Kidney (tissue), 22 donors: ENCODE measurements at regions of chr11 and their contacts with region 1.

Region 1: GRCh38 chr11:93895106-93895862 is 44.9 kb upstream of the VSTM5 start:
- DNase-seq: peak in 3 of 5 donors; percentile 39 to 85 (median 79)
- H3K4me3 ChIP-seq: no peak overlapping the region
- H3K27ac ChIP-seq: no peak overlapping the region
- H3K4me1 ChIP-seq: no peaks in the 10 kb centered on the region
- H3K27me3 ChIP-seq: no peaks in the 10 kb centered on the region
- CTCF ChIP-seq: peak; percentile 53

Region 2: DNA sequence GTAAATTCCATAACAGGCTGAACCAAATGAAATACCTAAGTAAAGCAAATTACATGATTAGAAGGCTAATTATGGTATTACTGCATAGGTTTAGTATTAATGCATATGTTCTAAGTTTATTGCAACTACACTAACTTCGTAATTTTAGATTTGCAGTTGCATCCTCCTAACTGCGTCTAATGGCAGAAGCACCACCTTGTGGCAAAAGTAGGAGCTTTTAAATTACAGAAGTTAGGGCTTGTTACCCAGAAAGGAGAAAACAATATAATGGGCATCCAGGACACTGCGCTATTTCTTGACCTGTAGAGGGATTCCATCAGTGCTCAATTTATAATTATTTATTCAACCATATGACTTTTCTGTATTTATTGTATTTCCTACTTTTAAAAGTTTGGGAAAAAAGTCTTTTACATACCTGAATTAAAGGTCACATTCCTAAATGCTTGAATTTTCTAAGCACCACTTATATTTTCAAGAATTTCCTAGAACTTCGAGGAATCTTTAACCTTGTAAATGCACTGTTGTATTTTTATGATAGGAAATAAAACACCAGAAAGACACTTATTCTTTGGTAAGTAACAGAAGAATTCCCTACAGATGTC is 522.2 kb after region 1 on chr11:
- intact Hi-C with region 1: loop called (anchors 10 kb)
- DNase-seq: peak in 2 of 5 donors; percentile 29 to 74
- H3K4me3 ChIP-seq: no peak overlapping the region
- H3K27ac ChIP-seq: no peak overlapping the region
- H3K4me1 ChIP-seq: no peaks in the 10 kb centered on the region
- H3K27me3 ChIP-seq: no peaks in the 10 kb centered on the region
- CTCF ChIP-seq: peak; percentile 52